Activated CD8-positive, alpha-beta T cell treated with anti-CD3 and anti-CD28 coated beads for 36 hours (primary cell): ENCODE measurements at regions of chr10 and their contacts with region 1.

Region 1: GRCh38 chr10:103966671-103967447 is at the start of gene SLK:
- DNase-seq: peak; percentile 82
- ATAC-seq: peak; percentile 83
- H3K4me3 Mint-ChIP-seq: peak within 1 kb of the TSS; percentile 93
- H3K27ac Mint-ChIP-seq: peak within 1 kb of the TSS; percentile 93
- H3K4me1 Mint-ChIP-seq: peaks cover 32% of the 10 kb centered on the region
- H3K27me3 Mint-ChIP-seq: no peaks in the 10 kb centered on the region
- CTCF ChIP-seq: no peak
- total RNA-seq, gene SLK: 17.8 to 19.2 TPM

Region 2: GRCh38 chr10:103918053-103918846 is 48.6 kb before region 1 on chr10 and contains the start of gene STN1:
- CTCF ChIA-PET with region 1: no interaction called
- POLR2A ChIA-PET with region 1: interaction called, 5 read pairs
- intact Hi-C with region 1: loop called (anchors 5 kb)
- DNase-seq: peak; percentile 98
- ATAC-seq: peak; percentile 93
- H3K4me3 Mint-ChIP-seq: peak within 1 kb of the TSS; percentile 92
- H3K27ac Mint-ChIP-seq: peak within 1 kb of the TSS; percentile 97
- H3K4me1 Mint-ChIP-seq: peaks cover 28% of the 10 kb centered on the region
- H3K27me3 Mint-ChIP-seq: no peaks in the 10 kb centered on the region
- CTCF ChIP-seq: no peak
- total RNA-seq, gene STN1: 32.1 to 32.4 TPM

Region 3: DNA sequence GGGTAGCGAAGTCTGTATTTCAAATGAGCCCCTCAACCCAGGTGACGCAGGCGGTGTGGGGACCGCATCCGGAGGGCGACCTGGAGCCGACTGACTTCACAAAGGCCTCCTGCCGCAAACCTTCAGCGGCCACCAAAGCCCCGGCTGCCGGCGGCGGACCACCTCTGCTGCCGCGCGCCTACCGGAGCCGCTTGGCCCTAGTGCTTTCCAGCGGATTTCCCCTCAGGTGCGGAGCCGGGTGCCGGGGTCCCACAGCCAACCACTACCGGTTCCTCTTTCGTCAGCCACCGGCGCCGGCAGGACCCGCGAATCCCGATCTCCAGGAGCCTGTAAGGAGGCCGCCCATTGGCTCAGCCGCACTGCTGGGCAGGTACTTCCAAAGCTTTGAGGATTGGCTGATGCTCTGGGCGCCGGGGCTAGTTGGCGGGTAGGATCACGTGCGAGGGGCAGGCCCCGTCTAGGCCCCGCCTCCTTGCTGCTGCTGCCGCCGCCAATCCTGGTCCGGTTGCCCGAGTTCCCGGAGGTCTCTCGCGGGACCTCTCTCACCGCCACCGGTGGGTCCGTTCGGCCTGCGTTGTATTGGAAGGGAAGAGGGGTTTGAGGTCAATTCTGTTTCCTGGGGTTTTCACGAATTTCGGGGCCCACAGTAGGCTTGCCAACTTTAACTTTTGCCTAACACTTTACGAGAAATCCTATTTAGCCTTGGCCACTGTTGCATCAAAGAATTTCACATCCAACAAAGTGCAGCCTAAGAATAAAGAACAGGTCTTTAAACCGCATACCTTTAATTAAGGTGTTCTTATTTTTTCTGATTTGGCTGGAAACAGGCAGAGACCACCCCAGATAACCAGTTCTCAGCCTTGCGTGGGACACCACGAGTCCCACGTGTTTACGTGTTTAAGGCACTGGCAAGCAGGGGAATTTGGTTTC is 302.1 kb after region 1 on chr10 and contains the start of gene GSTO2:
- CTCF ChIA-PET with region 1: no interaction called
- POLR2A ChIA-PET with region 1: no interaction called
- intact Hi-C with region 1: no loop called
- DNase-seq: peak; percentile 100
- ATAC-seq: peak; percentile 91
- H3K4me3 Mint-ChIP-seq: peak within 1 kb of the TSS; percentile 93
- H3K27ac Mint-ChIP-seq: peak within 1 kb of the TSS; percentile 98
- H3K4me1 Mint-ChIP-seq: peaks cover 40% of the 10 kb centered on the region
- H3K27me3 Mint-ChIP-seq: no peaks in the 10 kb centered on the region
- CTCF ChIP-seq: no peak
- total RNA-seq, gene GSTO2: 1.8 to 2.7 TPM